HepG2 (cell line): ENCODE measurements at regions of chr12 and their contacts with region 1.

Region 1: DNA sequence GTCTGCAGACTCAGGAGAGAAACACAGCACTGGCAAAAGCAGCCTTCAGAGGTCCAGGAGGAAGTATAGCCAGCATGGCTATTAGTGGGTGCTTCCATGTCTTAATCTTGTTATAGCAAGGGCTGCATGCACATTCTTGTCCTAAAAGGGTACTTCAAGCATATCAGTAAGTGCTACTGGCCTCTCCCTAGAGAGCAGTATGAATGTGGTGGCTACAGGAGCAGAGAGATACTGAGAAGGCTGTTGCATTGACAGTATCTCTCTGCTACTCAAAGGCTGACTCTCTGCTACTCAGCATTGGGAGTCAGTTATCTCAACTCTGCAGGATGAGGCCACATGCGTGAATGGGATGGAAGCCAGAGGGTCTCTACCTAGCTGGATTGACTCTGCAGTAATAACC is 2.0 kb downstream of the GARIN6 start:
- DNase-seq: no peak
- ATAC-seq: no peak
- H3K4me3 ChIP-seq: no peak overlapping the region
- H3K27ac ChIP-seq: no peak overlapping the region
- H3K4me1 ChIP-seq: no peaks in the 10 kb centered on the region
- H3K27me3 ChIP-seq: no peaks in the 10 kb centered on the region
- CTCF ChIP-seq: no peak
- EP300 ChIP-seq: no peak
- POLR2A ChIP-seq: no peak
- RAD21 ChIP-seq: no peak

Region 2: DNA sequence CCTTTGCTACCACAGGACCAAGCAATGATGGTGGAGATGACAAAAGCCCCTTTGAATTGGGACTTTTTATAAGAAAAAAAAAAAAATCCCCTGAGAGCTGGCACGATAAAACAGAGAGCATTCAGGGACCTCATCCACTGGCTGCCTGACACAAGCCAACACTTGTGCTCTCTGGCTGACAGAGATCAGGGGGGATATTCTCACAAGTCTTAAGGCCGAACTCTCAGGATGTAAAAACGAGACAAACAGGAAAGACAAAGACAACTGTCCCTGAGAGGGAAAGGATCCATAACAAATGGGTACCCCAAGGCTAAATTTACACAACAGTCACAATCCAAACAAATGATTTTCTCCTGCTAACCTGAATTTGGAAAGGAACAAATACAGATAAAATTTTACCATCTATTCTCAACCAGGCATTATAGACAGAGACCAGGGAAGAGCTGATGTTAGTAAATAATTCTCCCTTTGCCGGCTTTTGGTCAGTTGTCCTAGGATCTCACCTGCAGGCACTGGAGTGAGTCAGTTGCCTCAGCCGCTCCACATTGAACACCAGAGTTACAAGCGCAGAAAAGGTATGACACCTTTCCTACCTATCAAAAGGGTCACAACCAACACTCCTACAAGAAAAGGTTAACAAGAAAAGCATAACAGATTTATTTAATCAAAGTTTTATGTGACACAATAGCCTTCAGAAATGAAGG is 39.9 kb before region 1 on chr12:
- CTCF ChIA-PET with region 1: no interaction called
- POLR2A ChIA-PET with region 1: no interaction called
- in situ Hi-C with region 1: no loop called
- intact Hi-C with region 1: loop called (anchors 1 kb)
- DNase-seq: no peak
- ATAC-seq: no peak
- H3K4me3 ChIP-seq: no peak overlapping the region
- H3K27ac ChIP-seq: no peak overlapping the region
- H3K4me1 ChIP-seq: no peaks in the 10 kb centered on the region
- H3K27me3 ChIP-seq: no peaks in the 10 kb centered on the region
- CTCF ChIP-seq: no peak
- EP300 ChIP-seq: no peak
- POLR2A ChIP-seq: no peak
- RAD21 ChIP-seq: no peak

Region 3: GRCh38 chr12:99920353-99920960 is 270.9 kb after region 1 on chr12:
- CTCF ChIA-PET with region 1: no interaction called
- POLR2A ChIA-PET with region 1: no interaction called
- in situ Hi-C with region 1: no loop called
- intact Hi-C with region 1: no loop called
- DNase-seq: no peak
- ATAC-seq: no peak
- H3K4me3 ChIP-seq: no peak overlapping the region
- H3K27ac ChIP-seq: no peak overlapping the region
- H3K4me1 ChIP-seq: no peaks in the 10 kb centered on the region
- H3K27me3 ChIP-seq: no peaks in the 10 kb centered on the region
- CTCF ChIP-seq: no peak
- EP300 ChIP-seq: no peak
- POLR2A ChIP-seq: no peak
- RAD21 ChIP-seq: no peak